ENCODE measurements at regions of chr7 and their contacts with region 1.

Region 1: DNA sequence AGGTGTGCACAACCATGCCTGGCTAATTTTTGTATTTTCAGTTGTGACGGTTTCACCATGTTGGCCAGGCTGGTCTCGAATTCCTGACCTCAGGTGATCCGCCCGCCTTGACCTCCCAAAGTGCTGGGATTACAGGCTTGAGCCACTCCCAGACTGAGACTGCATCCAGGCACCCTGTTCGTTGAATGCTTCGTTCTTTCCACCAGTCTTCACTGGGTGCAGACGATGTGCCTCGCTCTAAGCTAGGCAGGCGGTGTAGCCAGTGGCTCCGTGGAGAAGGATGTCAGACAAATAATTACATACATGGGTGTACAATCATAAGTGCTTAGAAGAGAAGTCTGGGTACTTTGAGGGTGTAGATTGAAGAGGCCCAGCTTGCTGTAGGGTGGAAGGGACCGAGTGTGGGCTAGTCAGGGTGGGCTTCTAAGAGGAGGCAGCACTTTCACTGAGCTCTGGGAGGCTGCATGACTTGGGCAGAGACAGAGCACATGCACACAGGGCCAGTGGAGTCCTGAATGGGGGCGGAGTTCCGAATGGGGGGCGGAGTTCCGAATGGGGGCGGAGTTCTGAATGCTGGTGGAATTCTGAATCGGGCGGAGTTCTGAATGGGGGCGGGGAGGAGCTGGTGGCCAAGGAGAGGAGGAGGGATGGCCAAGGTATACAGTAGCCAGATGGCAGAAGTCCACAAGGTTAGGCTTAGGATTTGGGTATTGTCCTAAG is 74.3 kb downstream of the COL26A1 start:
- DNase-seq: no peak
- H3K4me3 ChIP-seq: no peak overlapping the region
- H3K27ac ChIP-seq: no peak overlapping the region
- H3K4me1 ChIP-seq: no peaks in the 10 kb centered on the region
- H3K27me3 ChIP-seq: peaks cover 0 to 8% (median 0%) of the 10 kb centered on the region in 5 experiments

Region 2: DNA sequence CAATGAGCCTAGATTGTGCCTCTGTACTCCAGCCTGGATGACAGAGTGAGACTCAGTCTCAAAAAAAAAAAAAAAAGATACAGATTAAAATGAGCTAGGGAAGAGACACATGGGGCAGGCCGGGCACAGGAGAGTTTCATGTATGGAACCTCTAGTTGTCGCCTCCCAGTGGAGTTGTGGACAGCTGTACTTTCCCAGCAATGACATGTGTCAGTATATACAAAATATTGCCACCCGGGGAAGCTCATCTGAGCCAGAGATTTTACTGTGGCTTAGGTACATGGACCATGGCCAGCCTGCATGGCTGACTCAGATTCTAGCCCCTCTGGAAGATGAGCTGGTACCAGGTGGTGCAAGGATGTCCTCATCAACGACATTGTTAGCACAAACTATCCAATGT is 13.0 kb after region 1 on chr7:
- CTCF ChIA-PET with region 1: interaction called, 10 read pairs
- POLR2A ChIA-PET with region 1: no interaction called
- DNase-seq: no peak
- H3K4me3 ChIP-seq: no peak overlapping the region
- H3K27ac ChIP-seq: no peak overlapping the region
- H3K4me1 ChIP-seq: no peaks in the 10 kb centered on the region
- H3K27me3 ChIP-seq: peaks cover 0 to 2% (median 0%) of the 10 kb centered on the region in 5 experiments

Region 3: GRCh38 chr7:101470668-101471487 is 33.9 kb after region 1 on chr7:
- CTCF ChIA-PET with region 1: no interaction called
- POLR2A ChIA-PET with region 1: no interaction called
- DNase-seq: no peak
- H3K4me3 ChIP-seq: no peak overlapping the region
- H3K27ac ChIP-seq: no peak overlapping the region
- H3K4me1 ChIP-seq: peaks cover 0 to 21% (median 15%) of the 10 kb centered on the region in 4 experiments
- H3K27me3 ChIP-seq: no peaks in the 10 kb centered on the region

Region 4: DNA sequence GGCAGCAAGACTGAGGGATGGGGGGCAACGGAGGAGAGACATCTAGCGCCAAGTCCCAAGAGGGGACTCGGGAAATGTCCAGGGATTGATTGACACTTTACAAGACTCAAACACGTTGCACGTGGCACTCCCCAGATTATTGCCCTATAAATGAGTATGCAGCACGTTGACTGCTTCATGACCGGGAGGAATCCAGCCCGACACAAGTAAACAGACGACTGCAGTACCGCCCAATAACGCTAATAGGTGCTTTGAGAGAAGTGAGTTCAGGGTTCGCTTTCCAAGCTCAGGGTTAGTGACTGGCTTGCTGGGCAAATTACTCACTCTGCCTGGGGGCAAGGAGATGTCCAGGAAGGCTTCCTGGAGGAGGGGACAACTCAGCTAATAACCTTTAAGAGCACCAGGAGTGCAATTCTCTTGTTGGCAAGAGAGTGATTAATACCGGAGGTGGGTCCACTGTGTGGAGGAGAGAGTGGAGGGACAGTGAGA is 265.4 kb after region 1 on chr7:
- CTCF ChIA-PET with region 1: no interaction called
- POLR2A ChIA-PET with region 1: no interaction called
- DNase-seq: no peak
- H3K4me3 ChIP-seq: no peak overlapping the region
- H3K27ac ChIP-seq: no peak overlapping the region
- H3K4me1 ChIP-seq: no peaks in the 10 kb centered on the region
- H3K27me3 ChIP-seq: no peaks in the 10 kb centered on the region